ENCODE measurements at regions of chr2 and their contacts with region 1.

Region 1: GRCh38 chr2:192162392-192163042 is 32.2 kb downstream of the TMEFF2 start:
- DNase-seq: no peak
- H3K4me3 ChIP-seq: no peak overlapping the region
- CTCF ChIP-seq: peak; percentile 72

Region 2: GRCh38 chr2:191560411-191560980 is 602.0 kb before region 1 on chr2:
- CTCF ChIA-PET with region 1: interaction called, 65 read pairs
- POLR2A ChIA-PET with region 1: no interaction called
- DNase-seq: no peak
- H3K4me3 ChIP-seq: no peak overlapping the region
- CTCF ChIP-seq: no peak

Region 3: DNA sequence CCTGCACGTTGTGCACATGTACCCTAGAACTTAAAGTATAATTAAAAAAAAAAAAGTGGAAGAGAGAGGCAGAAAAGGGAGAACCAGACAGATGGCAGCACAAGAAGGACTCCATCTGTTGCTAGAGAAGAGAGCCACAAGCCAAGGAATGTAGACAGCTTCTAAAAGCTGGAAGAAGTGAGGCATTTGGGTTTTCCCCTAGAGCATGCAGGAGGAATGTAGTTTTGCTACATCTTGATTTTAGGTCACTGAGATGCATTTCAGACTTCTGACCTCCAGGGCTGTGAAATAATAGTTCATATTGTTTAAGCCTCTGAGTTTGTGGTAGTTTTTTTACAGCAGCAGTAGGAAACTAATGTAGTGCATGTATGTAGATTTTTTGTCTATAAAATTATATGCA is 361.6 kb before region 1 on chr2:
- CTCF ChIA-PET with region 1: interaction called, 601 read pairs
- POLR2A ChIA-PET with region 1: no interaction called
- DNase-seq: no peak
- H3K4me3 ChIP-seq: no peak overlapping the region
- CTCF ChIP-seq: no peak

Region 4: DNA sequence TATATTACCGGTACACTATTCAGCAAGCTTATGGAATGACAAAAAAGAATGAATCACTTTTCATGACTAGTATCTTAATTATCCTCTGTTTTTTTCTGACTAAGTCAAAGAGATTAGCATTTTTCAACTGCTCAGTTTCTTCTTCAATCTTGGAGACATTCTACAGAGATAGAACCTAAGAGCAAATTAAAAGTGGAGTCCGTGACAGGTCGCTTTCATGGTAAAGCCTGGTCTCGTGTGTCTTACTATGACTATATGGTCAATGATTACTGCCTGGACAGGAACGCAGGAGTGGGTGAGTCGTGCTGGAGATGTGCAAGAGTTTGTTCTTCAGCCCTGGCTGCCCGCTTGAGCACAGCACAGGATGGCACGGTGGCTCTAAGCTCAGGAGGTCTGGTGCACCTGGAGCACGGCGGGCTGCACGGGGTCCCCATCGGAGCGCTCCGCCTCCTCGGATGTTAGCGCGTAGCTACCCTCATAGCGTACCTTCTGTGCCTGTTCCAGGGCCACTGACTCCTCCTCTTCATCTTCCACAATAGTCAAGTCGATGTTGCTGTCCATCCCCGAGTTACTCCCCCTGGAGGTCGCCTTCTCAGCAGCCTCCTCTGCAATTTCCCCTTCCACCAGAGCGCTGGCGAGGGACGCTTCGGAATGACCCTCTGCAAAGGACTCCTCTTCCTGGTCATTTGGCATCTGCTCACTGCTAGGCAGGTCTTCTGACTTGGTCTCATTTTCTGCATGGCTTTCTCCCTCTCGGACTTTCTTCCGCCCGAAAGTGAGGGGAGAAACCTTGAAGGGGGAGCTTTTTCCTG is 326.8 kb before region 1 on chr2:
- CTCF ChIA-PET with region 1: interaction called, 14 read pairs
- POLR2A ChIA-PET with region 1: no interaction called
- DNase-seq: no peak
- H3K4me3 ChIP-seq: no peak overlapping the region
- CTCF ChIP-seq: no peak

Region 5: DNA sequence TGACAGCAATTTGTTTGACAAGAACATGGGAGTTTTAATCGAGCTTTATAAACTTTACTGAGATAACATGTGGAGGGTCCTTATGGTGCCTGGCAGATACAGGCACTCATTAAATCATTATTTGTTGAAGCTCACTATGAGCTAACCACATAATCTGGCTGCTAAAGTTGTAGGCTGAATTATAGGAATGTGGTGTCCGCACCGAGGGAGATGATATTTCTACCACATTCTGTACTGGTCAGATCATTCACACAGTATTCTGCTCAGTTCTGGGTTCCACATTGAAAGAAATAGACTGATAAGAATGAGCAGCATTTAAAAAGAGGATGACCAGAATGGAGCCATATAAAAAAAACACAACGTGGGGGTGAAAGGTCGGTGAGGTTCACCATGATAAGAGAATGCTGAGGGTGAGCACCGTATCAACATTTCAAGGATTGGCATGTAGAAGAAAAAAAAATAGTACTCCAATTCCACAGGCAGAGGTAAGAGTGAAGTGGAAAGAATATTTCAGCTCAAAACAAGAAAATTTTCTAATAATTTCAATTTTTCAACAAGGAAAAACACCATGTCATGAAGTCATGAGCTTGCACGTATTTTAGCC is 22.2 kb before region 1 on chr2:
- CTCF ChIA-PET with region 1: interaction called, 16 read pairs
- POLR2A ChIA-PET with region 1: no interaction called
- DNase-seq: no peak
- H3K4me3 ChIP-seq: no peak overlapping the region
- CTCF ChIP-seq: no peak

Region 6: GRCh38 chr2:192230889-192231453 is 68.5 kb after region 1 on chr2:
- CTCF ChIA-PET with region 1: no interaction called
- POLR2A ChIA-PET with region 1: no interaction called
- DNase-seq: no peak
- H3K4me3 ChIP-seq: no peak overlapping the region
- CTCF ChIP-seq: no peak

Region 7: GRCh38 chr2:192345287-192345686 is 182.8 kb after region 1 on chr2:
- CTCF ChIA-PET with region 1: no interaction called
- POLR2A ChIA-PET with region 1: no interaction called
- DNase-seq: no peak
- H3K4me3 ChIP-seq: no peak overlapping the region
- CTCF ChIP-seq: no peak

Measured in AG04449 (cell line).